Psoas muscle (tissue), 8 donors: ENCODE measurements at regions of chr19 and their contacts with region 1.

Region 1: GRCh38 chr19:7997809-7998480 is 7.5 kb downstream of the ELAVL1 start:
- DNase-seq: peak in 1 of 2 donors; percentile 20
- ATAC-seq: no peak
- H3K4me3 ChIP-seq: no peak overlapping the region
- H3K27ac ChIP-seq: no peak overlapping the region
- H3K4me1 ChIP-seq: peaks cover 76% of the 10 kb centered on the region
- H3K27me3 ChIP-seq: no peaks in the 10 kb centered on the region
- CTCF ChIP-seq: no peak

Region 2: DNA sequence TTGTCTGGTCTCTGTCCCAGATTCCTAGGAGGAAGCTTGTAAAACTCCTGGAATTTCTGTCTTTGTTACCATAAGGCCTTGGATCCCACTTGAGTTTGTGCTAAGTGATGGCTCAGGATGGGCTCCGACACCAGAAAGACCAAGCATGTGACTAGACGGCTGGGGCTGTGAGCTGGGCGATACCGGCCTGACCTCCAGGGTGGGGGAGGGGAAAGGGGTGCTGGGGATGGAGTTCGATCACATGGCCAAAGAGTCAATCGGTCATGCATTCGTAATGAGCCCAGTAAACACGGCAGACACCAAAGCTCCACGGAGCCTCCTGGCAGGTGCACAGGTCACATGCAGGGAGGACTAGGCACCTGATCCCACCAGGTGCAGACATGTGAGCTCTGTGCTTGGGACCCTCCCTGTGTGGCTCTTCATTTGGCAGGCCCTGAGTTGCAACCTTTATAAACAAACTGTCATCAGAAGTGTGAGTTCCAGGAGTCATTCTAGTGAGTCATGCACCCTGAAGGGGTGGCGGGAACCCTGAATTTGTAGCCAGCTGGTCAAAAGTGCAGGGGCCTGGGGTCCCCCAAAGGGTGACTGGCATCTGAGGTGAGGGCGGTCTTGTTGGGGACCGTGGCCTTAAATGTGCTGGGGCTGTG is 19.6 kb before region 1 on chr19:
- intact Hi-C with region 1: loop called in 1 of 2 experiments (anchors 2 kb)
- DNase-seq: peak in 1 of 2 donors; percentile 48
- ATAC-seq: peak in 2 of 4 donors; percentile 11 to 29
- H3K4me3 ChIP-seq: no peak overlapping the region
- H3K27ac ChIP-seq: no peak overlapping the region
- H3K4me1 ChIP-seq: peaks cover 25% of the 10 kb centered on the region
- H3K27me3 ChIP-seq: no peaks in the 10 kb centered on the region
- CTCF ChIP-seq: no peak

Region 3: GRCh38 chr19:8095903-8096470 is 98.0 kb after region 1 on chr19:
- intact Hi-C with region 1: no loop called
- DNase-seq: no peak
- ATAC-seq: no peak
- H3K4me3 ChIP-seq: no peak overlapping the region
- H3K27ac ChIP-seq: no peak overlapping the region
- H3K4me1 ChIP-seq: no peaks in the 10 kb centered on the region
- H3K27me3 ChIP-seq: peaks cover 0 to 2% (median 0%) of the 10 kb centered on the region in 3 donors
- CTCF ChIP-seq: no peak